ENCODE measurements at regions of chr6 and their contacts with region 1.

Region 1: GRCh38 chr6:41318654-41319565 is 16.5 kb upstream of the NCR2 start:
- DNase-seq: peak; percentile 62
- ATAC-seq: peak; percentile 98
- H3K4me3 ChIP-seq: no peak overlapping the region
- H3K27ac ChIP-seq: no peak overlapping the region
- H3K4me1 ChIP-seq: peaks cover 7% of the 10 kb centered on the region; the same call in 1 of the 2 replicates
- H3K27me3 ChIP-seq: 0 out of 4 replicates have a peak, but pooled peaks cover 0 to 2% of the 10 kb centered on the region in 2 experiments
- CTCF ChIP-seq: peak; percentile 90 to 100 (median 100)
- EP300 ChIP-seq: no peak
- POLR2A ChIP-seq: no peak
- RAD21 ChIP-seq: peak; percentile 94

Region 2: GRCh38 chr6:41008011-41008410 is 310.9 kb before region 1 on chr6:
- CTCF ChIA-PET with region 1: no interaction called
- POLR2A ChIA-PET with region 1: no interaction called
- RAD21 ChIA-PET with region 1: no interaction called
- SMC1A ChIA-PET with region 1: no interaction called
- in situ Hi-C with region 1: loop called (anchors 10 kb)
- intact Hi-C with region 1: loop called (anchors 5 kb)
- DNase-seq: no peak
- ATAC-seq: no peak
- H3K4me3 ChIP-seq: no peak overlapping the region
- H3K27ac ChIP-seq: no peak overlapping the region
- H3K4me1 ChIP-seq: no peaks in the 10 kb centered on the region
- H3K27me3 ChIP-seq: 0 out of 4 replicates have a peak, but pooled peaks cover 0 to 2% of the 10 kb centered on the region in 2 experiments
- CTCF ChIP-seq: no peak
- EP300 ChIP-seq: no peak
- POLR2A ChIP-seq: no peak
- RAD21 ChIP-seq: no peak

Region 3: DNA sequence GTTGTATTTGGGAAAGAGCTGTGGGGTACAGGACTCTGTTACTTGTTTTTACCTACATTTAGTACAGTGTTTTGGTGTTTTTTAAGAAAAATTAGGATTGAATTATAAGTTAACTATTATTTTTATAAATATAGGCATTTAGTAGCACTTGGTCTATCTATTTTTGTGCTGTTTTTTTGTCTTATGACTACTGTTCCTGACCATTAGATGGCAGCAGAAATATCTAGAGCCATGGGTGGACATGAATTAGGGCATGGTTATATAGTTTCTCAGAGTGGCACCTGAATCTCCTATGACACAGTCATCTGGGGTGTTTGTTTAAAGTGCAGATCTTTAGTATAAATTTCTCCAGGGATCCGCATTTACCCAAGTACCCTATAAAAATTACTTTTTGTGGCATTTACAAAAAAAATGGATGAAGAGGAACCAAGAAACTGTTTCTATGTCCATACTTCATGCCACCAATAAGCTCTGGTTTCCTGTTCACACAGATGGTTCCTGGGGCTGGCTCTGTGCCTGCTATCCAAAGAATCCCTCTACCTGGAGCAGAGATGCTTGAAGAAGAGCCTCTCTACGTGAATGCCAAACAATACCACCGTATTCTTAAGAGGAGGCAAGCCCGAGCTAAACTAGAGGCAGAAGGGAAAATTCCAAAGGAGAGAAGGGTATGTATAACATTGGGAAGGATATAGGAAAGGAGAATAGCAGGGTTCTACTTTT is 226.3 kb before region 1 on chr6:
- CTCF ChIA-PET with region 1: interaction called, 17 read pairs
- POLR2A ChIA-PET with region 1: no interaction called
- RAD21 ChIA-PET with region 1: interaction called, 10 read pairs
- SMC1A ChIA-PET with region 1: interaction called, 12 read pairs
- in situ Hi-C with region 1: loop called (anchors 5 kb)
- intact Hi-C with region 1: loop called (anchors 2 kb)
- DNase-seq: no peak
- ATAC-seq: peak; percentile 58
- H3K4me3 ChIP-seq: no peak overlapping the region
- H3K27ac ChIP-seq: no peak overlapping the region
- H3K4me1 ChIP-seq: no peaks in the 10 kb centered on the region
- H3K27me3 ChIP-seq: no peaks in the 10 kb centered on the region
- CTCF ChIP-seq: peak; percentile 31 to 45 (median 41); a peak in 4 of 6 replicates
- EP300 ChIP-seq: no peak
- POLR2A ChIP-seq: no peak
- RAD21 ChIP-seq: peak; percentile 62

Region 4: DNA sequence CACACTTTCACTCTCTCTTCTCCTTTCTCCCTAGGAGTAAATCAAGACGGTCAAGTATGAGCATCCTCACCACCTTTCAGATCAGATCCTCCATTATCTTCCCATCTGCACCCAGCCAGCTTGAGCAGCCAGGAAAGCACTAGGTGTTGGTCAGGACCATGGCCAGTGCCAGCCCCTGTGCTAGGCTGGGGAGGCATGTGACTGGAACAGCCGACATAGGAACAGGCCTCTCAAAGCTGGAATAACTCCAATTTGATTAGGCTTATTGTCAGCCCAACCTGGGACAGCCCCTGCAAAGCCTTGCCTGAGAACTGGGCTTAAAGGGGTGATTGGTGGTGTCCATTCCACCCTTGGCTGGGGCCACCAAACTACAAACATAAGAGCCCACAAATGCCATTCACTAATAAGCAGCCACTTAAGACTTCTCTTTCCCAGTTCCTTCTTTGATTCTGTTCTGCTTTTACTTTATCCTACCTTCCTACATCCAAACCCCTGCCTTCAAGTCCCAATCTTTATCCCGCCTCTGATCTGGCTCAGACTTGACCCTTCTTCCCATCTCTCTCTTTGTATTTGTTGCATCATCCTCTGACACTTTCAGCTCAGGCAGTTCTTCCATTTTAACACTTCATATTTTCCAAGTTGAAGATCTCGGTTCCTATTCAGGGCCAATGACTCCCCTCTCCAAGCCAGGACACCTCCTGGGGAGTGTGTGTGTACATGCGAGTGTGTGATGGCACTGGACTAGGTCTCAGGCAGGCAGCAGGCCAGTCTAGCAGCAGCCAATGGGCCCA is 151.5 kb before region 1 on chr6:
- CTCF ChIA-PET with region 1: no interaction called
- POLR2A ChIA-PET with region 1: no interaction called
- RAD21 ChIA-PET with region 1: no interaction called
- SMC1A ChIA-PET with region 1: no interaction called
- in situ Hi-C with region 1: no loop called
- intact Hi-C with region 1: no loop called
- DNase-seq: no peak
- ATAC-seq: no peak
- H3K4me3 ChIP-seq: no peak overlapping the region
- H3K27ac ChIP-seq: no peak overlapping the region
- H3K4me1 ChIP-seq: no peaks in the 10 kb centered on the region
- H3K27me3 ChIP-seq: peaks cover 0 to 2% of the 10 kb centered on the region in 2 experiments; a peak in 1 of 4 replicates
- CTCF ChIP-seq: no peak
- EP300 ChIP-seq: no peak
- POLR2A ChIP-seq: no peak
- RAD21 ChIP-seq: no peak

Region 5: DNA sequence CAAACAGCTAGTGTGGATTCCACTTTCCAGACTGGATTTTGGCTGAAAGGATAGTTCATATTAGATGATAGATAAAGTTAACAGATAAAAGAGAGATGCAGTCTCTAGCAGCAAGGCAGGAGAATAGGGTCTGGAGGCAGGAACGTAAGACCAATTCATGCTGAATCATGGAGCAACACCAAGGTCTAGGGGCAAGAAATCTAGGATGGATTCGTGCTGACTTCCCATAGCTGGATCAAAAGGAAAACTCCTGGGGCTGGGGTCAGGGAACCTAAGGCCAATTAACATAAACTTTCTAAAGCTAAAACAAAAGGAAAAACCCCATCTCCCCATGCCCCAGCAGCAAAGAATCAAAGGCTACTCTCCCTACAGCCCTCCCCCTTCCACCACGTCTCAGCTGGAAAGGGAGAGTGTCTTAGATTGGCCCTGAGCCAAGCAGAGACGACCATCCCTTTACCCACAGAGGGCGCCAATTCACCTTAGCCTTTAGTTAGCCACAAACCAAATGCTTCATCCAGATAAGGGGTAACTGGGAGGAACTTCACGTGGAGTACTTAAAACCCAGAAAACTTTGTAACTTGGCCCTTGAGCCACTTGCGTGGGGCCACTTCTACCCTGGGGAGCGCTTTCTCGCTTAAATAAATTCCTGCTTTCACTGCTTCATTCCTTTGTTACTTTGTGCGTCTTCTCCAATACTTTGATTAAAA is 40.1 kb before region 1 on chr6:
- CTCF ChIA-PET with region 1: interaction called, 68 read pairs
- POLR2A ChIA-PET with region 1: no interaction called
- RAD21 ChIA-PET with region 1: interaction called, 27 read pairs
- SMC1A ChIA-PET with region 1: interaction called, 44 read pairs
- in situ Hi-C with region 1: no loop called
- intact Hi-C with region 1: loop called (anchors 5 kb)
- DNase-seq: no peak
- ATAC-seq: peak; percentile 78
- H3K4me3 ChIP-seq: no peak overlapping the region
- H3K27ac ChIP-seq: no peak overlapping the region
- H3K4me1 ChIP-seq: no peaks in the 10 kb centered on the region
- H3K27me3 ChIP-seq: no peaks in the 10 kb centered on the region
- CTCF ChIP-seq: peak; percentile 58 to 65 (median 65)
- EP300 ChIP-seq: no peak
- POLR2A ChIP-seq: no peak
- RAD21 ChIP-seq: peak; percentile 79

Region 6: GRCh38 chr6:41298785-41299502 is 20.0 kb before region 1 on chr6:
- CTCF ChIA-PET with region 1: interaction called, 196 read pairs
- POLR2A ChIA-PET with region 1: interaction called, 7 read pairs
- RAD21 ChIA-PET with region 1: interaction called, 143 read pairs
- SMC1A ChIA-PET with region 1: interaction called, 157 read pairs
- in situ Hi-C with region 1: no loop called
- intact Hi-C with region 1: no loop called
- DNase-seq: no peak
- ATAC-seq: peak; percentile 42; the same call in 2 of the 3 replicates
- H3K4me3 ChIP-seq: no peak overlapping the region
- H3K27ac ChIP-seq: no peak overlapping the region
- H3K4me1 ChIP-seq: peaks cover 7% of the 10 kb centered on the region
- H3K27me3 ChIP-seq: no peaks in the 10 kb centered on the region
- CTCF ChIP-seq: no peak
- EP300 ChIP-seq: no peak
- POLR2A ChIP-seq: no peak
- RAD21 ChIP-seq: no peak

Region 7: GRCh38 chr6:41379306-41379705 is 60.4 kb after region 1 on chr6:
- CTCF ChIA-PET with region 1: no interaction called
- POLR2A ChIA-PET with region 1: no interaction called
- RAD21 ChIA-PET with region 1: no interaction called
- SMC1A ChIA-PET with region 1: no interaction called
- in situ Hi-C with region 1: no loop called
- intact Hi-C with region 1: no loop called
- DNase-seq: no peak
- ATAC-seq: no peak
- H3K4me3 ChIP-seq: no peak overlapping the region
- H3K27ac ChIP-seq: no peak overlapping the region
- H3K4me1 ChIP-seq: no peaks in the 10 kb centered on the region
- H3K27me3 ChIP-seq: peaks cover 18 to 20% of the 10 kb centered on the region in 2 experiments
- CTCF ChIP-seq: no peak
- EP300 ChIP-seq: no peak
- POLR2A ChIP-seq: no peak
- RAD21 ChIP-seq: no peak